Gastrocnemius medialis (tissue), 4 donors: ENCODE measurements at regions of chr11 and their contacts with region 1.

Region 1: DNA sequence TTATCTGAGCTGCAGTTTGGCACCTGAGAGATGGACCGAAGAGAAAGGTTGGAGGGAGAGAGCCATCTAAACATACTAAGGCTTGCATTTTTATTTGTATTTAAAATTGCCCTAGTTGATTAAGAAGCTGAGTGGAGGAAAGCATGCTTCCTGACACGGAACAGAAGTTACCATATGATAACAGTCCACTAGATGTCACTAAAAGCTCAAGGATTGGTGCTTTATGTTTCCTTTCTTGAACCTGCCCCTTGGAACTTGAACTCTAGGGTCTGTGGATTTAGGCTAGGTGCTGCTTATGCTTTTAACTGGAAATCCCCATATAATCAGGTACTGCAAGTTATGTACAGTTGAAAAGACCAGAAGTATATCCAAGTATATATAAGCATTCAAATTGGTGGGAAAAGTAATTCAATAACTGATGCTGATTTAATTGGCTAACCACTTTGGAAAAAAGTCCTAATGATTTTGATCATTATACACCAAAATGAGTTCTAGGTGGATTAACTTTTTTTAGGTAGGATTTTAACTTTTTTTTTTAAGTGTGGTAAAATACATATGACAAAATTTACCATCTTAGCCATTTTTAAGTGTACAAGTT is 9.5 kb downstream of the RBMXL2 start:
- DNase-seq: no peak
- ATAC-seq: no peak
- H3K4me3 ChIP-seq: no peak overlapping the region
- H3K27ac ChIP-seq: no peak overlapping the region
- H3K4me1 ChIP-seq: no peaks in the 10 kb centered on the region
- H3K27me3 ChIP-seq: no peaks in the 10 kb centered on the region
- CTCF ChIP-seq: peak; percentile 15 to 59 (median 51)
- POLR2A ChIP-seq: no peak

Region 2: GRCh38 chr11:7165911-7166310 is 67.6 kb after region 1 on chr11:
- in situ Hi-C with region 1: no loop called
- intact Hi-C with region 1: no loop called
- DNase-seq: no peak
- ATAC-seq: no peak
- H3K4me3 ChIP-seq: no peak overlapping the region
- H3K27ac ChIP-seq: no peak overlapping the region
- H3K4me1 ChIP-seq: no peaks in the 10 kb centered on the region
- H3K27me3 ChIP-seq: no peaks in the 10 kb centered on the region
- CTCF ChIP-seq: no peak
- POLR2A ChIP-seq: no peak

Region 3: GRCh38 chr11:7442588-7443215 is 344.4 kb after region 1 on chr11:
- in situ Hi-C with region 1: loop called in 2 of 4 experiments (anchors 25 kb)
- intact Hi-C with region 1: loop called (anchors 5 kb)
- DNase-seq: peak; percentile 18 to 39
- ATAC-seq: peak; percentile 51 to 87
- H3K4me3 ChIP-seq: no peak overlapping the region
- H3K27ac ChIP-seq: no peak overlapping the region
- H3K4me1 ChIP-seq: no peaks in the 10 kb centered on the region
- H3K27me3 ChIP-seq: no peaks in the 10 kb centered on the region
- CTCF ChIP-seq: peak; percentile 61 to 86 (median 66)
- POLR2A ChIP-seq: no peak

Region 4: DNA sequence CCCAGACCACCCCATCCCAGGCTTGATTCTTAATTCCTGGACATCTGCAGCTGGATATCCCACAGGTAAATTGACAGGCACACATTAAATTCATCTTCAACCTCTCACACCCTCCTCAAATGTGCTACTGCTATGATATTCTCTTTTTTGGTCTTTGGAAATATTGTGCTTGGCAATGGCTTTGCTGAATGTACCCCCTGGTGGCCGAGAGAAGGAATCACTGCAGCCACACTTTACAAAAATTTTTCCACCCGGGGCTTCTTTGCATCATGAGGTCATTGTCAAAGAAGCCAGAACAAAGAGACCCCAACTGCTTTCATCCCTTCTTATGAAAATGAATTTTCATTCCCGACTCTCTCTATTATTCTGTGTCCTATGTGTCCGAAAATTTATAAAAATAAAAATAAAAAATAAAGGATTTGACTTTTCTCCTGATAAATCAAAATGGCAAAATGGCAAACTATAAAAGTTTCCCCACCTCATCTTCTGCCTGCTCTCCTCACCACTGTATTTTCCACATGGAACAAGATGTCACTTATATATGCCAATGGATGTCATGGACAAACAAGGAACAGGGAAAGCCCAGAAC is 590.0 kb after region 1 on chr11:
- in situ Hi-C with region 1: loop called (anchors 10 to 25 kb)
- intact Hi-C with region 1: no loop called
- DNase-seq: no peak
- ATAC-seq: no peak
- H3K4me3 ChIP-seq: no peak overlapping the region
- H3K27ac ChIP-seq: no peak overlapping the region
- H3K4me1 ChIP-seq: peaks cover 12 to 13% of the 10 kb centered on the region in 2 donors
- H3K27me3 ChIP-seq: no peaks in the 10 kb centered on the region
- CTCF ChIP-seq: peak in 3 of 5 experiments; percentile 35 to 66 (median 60)
- POLR2A ChIP-seq: no peak

Region 5: DNA sequence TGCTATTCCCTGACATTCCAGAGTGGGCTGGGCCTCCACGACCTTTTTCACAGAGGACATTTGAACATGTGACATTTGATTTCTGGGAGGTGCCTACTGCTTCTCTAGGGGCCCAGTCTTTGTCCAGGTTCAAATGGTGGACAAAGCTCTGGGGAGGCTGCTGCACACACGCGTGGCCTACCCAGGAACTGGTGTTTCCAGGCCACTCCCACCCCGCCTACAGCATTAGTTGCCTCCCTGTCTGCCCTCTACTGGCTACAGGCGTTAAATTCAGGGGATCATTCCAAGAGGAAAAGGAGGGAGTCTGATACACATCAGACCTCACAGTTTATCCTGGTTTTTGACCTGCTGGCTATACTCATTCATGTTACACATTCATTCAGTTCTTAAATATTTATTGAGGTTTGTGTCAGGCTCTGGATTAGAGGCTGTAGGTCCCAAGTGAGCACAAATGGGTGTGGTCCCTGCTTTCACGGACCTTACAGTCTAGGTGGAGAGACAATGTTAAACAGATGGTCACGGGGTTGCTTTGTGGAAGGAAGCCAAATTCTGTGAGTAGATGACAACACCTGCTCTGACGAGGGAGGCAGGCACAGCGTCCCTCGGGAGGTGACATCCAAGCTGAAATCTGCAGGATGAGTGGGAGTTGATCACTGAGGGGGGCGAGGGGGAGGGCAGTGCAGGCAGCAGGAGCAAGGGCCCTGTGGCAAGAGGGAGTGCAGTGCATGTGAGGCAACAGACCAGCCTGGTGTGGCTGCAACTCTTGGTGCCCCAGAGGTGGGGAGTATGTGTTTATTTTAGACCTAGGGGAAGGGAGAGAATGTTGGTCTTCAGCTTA is 994.5 kb after region 1 on chr11:
- in situ Hi-C with region 1: no loop called
- intact Hi-C with region 1: loop called (anchors 5 kb)
- DNase-seq: no peak
- ATAC-seq: peak; percentile 29 to 40
- H3K4me3 ChIP-seq: no peak overlapping the region
- H3K27ac ChIP-seq: no peak overlapping the region
- H3K4me1 ChIP-seq: no peaks in the 10 kb centered on the region
- H3K27me3 ChIP-seq: no peaks in the 10 kb centered on the region
- CTCF ChIP-seq: peak in 4 of 5 experiments; percentile 12 to 49 (median 34)
- POLR2A ChIP-seq: no peak